Kidney (tissue), 22 donors: ENCODE measurements at regions of chr2 and their contacts with region 1.

Region 1: GRCh38 chr2:219402665-219403515 is 15.2 kb upstream of the DNPEP start:
- DNase-seq: peak in 4 of 5 donors; percentile 80 to 92 (median 89)
- H3K4me3 ChIP-seq: no peak overlapping the region
- H3K27ac ChIP-seq: no peak overlapping the region
- H3K4me1 ChIP-seq: no peaks in the 10 kb centered on the region
- H3K27me3 ChIP-seq: no peaks in the 10 kb centered on the region
- CTCF ChIP-seq: peak; percentile 87

Region 2: DNA sequence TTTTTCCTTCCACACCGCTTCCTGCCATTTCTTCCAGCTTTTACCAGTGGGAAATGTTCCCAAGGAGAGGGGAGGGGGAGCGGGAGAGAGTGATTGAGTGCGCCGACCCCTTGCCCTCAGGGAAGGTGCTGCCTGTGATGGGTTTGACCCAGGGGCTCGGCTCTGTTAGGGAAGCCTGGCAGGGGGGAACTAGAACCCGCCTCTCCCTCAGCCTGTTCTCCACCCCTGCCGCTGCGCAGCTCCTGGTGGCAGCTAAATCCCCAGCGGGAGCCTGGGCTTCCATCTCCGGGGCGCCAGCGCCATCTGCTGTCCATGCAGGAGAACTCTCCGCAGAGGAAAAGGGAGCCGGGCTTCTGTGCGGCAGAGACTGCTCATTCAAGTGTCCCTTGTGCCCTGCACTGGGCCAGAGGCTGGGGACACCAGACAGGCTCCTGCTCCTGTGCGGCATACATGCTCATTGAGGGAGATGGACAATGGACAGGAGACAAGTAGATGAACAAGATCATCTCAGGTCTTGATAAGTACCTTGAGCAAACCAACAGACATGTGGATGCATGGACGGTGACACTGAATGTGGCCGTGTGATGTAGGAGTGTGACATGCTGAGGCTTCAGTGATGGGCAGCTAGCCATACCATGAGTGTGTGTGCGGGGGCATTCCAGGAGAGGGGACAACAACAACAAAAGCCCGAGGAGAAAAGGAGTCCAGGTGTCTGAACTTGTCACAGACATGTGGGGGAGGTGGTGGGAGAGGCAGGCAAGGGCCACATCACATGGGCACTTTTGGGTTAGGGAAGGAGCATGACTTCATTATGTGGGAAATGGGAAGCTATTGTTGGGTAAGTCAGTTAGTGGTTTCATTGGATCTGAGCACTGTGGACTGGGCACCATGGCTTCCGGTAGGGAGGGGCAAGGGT is 127.4 kb after region 1 on chr2:
- intact Hi-C with region 1: loop called (anchors 10 kb)
- DNase-seq: peak; percentile 91 to 95 (median 93)
- H3K4me3 ChIP-seq: no peak overlapping the region
- H3K27ac ChIP-seq: no peak overlapping the region
- H3K4me1 ChIP-seq: no peaks in the 10 kb centered on the region
- H3K27me3 ChIP-seq: peaks cover 6% of the 10 kb centered on the region
- CTCF ChIP-seq: peak; percentile 99

Region 3: DNA sequence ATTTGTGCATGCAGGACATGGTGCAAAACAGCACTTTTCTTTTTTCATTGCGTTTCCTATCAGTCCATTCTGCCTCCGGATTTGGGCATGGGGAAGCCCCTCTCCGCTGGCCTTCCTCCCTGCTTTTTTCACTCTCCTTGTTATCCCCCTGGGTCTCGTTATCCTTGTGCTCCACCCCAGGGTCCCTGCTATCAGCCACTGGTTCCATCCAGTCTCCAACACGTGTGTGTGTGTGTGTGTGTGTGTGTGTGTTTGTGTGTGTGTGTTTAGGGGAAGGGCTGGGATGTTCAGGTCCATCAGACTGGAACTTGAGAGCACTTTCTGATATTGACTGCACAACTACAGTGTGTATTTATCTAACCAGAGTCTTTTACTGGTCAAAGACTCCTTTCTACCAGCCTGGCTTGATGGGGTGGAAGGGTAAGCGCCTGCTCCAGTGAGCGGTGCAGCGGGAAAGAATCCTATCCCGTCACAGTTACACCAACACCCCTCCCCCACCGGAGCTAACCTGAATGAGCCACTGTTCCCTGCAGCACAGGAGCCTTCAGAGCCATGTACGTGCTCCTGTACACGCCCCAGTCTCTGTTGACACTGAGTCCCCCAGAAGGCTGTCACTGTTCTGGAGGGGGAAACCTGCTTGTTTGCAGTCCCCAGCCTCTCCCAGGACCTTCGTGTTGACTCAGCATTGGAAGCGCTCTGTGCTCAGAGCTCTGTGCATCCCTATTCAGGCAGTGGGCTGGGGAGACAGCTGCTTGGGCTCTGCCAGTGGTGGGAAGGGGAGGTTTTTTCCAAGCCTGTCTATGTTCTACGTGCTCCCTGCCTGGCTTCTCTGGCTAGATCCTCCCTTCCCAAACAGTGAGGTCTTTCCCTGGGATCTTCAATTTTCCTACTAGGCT is 173.9 kb after region 1 on chr2:
- intact Hi-C with region 1: no loop called
- DNase-seq: peak in 4 of 5 donors; percentile 89 to 92 (median 91)
- H3K4me3 ChIP-seq: no peak overlapping the region
- H3K27ac ChIP-seq: no peak overlapping the region
- H3K4me1 ChIP-seq: peaks cover 0 to 3% (median 0%) of the 10 kb centered on the region in 3 donors
- H3K27me3 ChIP-seq: no peaks in the 10 kb centered on the region
- CTCF ChIP-seq: no peak